ENCODE measurements at regions of chr12 and their contacts with region 1.

Region 1: DNA sequence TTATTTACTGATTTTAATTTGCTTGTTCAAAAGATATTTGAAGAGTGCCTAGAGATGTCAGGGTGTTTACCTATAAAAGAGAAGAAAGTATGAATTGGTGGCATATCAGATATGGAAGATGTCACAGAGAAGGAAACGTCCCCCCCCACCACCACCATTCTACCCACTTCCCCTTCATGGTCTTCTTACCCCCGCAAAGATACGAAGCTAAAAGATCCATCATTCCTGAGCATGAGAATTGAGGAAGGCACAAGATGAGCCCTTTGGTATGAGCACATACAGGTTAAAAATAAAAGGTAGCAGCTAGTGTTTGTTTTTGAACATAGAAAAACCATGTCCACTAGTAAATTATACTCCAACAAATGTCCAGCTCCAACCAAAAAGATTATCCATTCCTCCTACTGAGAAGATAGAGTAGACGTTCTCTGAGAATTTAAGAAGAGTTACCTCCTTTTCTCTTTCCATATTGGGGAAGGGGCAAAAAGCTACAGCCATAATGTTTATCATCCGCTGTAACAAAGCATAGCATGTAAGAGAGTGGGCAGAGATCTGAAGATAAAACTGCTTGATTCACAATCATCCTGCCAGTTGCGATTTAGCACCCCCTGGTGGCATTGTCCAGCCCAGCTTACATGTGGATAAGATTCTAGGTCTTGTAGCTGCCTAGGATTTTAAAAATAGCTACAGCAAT is 29.1 kb downstream of the NFYB start:
- DNase-seq: peak; percentile 60 to 85
- ATAC-seq: peak; percentile 91 to 99
- H3K4me3 ChIP-seq: no peak overlapping the region
- H3K27ac ChIP-seq: peak overlapping the region; percentile 17 to 55 (median 28)
- H3K4me1 ChIP-seq: peaks cover 13 to 15% of the 10 kb centered on the region in 2 donors
- H3K27me3 ChIP-seq: no peaks in the 10 kb centered on the region
- CTCF ChIP-seq: peak; percentile 62 to 90 (median 75)
- POLR2A ChIP-seq: no peak

Region 2: DNA sequence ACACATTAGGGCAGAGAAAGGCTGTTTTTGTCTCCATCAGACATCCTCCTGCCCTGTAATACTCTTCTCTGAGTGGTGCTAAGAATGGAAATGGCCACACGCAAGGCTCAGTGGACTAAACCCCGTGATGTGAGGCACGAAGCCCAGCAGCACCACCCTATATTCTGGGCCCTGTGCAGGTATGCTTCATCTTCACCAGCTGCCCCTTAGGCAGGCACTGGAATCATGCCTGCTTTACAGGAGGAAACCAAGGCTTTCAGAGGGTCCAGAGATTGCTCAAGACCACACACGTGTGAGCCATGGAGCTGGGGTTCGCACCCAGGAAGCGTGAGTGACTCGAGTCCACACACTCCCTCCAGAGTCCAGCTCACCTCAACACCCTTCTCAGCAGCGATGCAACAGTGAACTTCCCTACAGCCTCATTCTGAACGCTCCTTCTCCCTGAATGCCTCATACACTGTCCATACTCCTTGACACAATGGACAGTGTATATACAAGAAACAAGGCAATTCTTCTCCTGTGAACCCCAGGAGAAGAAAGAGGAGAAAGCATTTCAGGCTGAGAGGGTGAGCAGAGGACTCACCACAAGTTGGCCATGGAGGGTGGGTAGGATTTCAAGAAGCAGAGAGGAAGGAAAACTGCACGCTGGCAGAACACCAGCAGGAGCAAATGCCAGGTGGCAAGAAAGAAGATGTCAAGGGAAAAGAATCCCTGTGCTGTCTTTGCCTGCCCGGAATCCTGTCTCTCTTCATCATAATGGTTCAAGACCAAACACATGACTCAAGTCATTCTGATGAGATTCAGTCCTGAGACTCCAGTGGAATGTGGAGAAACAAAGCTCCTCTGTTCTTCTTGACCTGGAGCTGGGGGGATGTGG is 307.0 kb before region 1 on chr12:
- in situ Hi-C with region 1: no loop called
- intact Hi-C with region 1: no loop called
- DNase-seq: peak; percentile 66 to 81
- ATAC-seq: peak; percentile 37 to 40
- H3K4me3 ChIP-seq: no peak overlapping the region
- H3K27ac ChIP-seq: peak overlapping the region; percentile 58 to 93 (median 72)
- H3K4me1 ChIP-seq: peaks cover 31 to 48% of the 10 kb centered on the region in 2 donors
- H3K27me3 ChIP-seq: no peaks in the 10 kb centered on the region
- CTCF ChIP-seq: no peak
- POLR2A ChIP-seq: no peak

Region 3: DNA sequence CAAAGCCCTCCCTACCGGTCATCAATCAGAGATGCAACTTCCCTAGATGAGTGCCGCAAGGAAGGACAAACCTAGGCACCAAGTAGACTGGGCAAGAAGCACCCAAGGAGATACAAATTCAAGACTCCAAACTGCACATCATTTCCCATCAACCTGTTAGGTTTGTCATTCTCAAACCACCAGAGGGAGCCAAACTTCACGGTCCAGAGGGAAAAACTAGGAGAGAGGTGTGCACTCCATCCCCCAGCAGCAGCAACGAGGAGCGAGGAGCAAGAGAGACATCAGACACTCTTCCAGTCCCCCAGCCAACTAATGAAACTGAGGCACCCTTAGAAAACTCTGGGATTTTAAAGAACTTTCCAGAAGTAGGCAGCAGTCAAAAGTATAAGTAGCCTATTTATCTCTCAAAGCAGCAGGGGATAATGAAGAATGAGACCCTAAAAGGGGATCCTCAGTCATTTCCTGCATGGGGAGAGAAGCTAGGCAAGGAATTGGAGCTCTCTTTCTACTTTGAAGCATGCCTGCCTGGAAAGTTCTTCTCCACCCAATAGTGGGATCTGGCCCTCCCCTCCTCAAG is 230.9 kb before region 1 on chr12:
- in situ Hi-C with region 1: loop called in 3 of 4 experiments (anchors 5 to 10 kb)
- intact Hi-C with region 1: loop called (anchors 1 kb)
- DNase-seq: peak; percentile 29 to 41
- ATAC-seq: peak; percentile 85 to 90
- H3K4me3 ChIP-seq: no peak overlapping the region
- H3K27ac ChIP-seq: no peak overlapping the region
- H3K4me1 ChIP-seq: no peaks in the 10 kb centered on the region
- H3K27me3 ChIP-seq: no peaks in the 10 kb centered on the region
- CTCF ChIP-seq: peak; percentile 46 to 77 (median 62)
- POLR2A ChIP-seq: no peak

Region 4: DNA sequence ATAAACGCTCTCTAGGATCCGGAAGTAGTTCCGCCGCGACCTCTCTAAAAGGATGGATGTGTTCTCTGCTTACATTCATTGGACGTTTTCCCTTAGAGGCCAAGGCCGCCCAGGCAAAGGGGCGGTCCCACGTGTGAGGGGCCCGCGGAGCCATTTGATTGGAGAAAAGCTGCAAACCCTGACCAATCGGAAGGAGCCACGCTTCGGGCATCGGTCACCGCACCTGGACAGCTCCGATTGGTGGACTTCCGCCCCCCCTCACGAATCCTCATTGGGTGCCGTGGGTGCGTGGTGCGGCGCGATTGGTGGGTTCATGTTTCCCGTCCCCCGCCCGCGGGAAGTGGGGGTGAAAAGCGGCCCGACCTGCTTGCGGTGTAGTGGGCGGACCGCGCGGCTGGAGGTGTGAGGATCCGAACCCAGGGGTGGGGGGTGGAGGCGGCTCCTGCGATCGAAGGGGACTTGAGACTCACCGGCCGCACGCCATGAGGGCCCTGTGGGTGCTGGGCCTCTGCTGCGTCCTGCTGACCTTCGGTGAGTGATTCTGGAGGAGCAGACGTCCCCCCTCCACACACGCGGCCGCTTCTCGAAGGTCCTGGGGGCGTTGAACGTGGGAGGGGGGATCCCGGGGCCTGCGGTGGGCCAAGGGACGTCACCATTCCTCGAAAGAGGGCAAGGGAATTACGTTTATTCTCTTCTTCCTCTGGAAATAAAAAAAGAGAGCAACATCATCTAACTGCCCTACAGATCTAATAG is 178.7 kb before region 1 on chr12 and contains the start of gene HSP90B1:
- in situ Hi-C with region 1: loop called in 1 of 4 experiments (anchors 25 kb)
- intact Hi-C with region 1: no loop called
- DNase-seq: peak; percentile 100
- ATAC-seq: peak; percentile 90 to 93
- H3K4me3 ChIP-seq: peak within 1 kb of the TSS; percentile 79 to 91 (median 88)
- H3K27ac ChIP-seq: peak within 1 kb of the TSS; percentile 91 to 97 (median 94)
- H3K4me1 ChIP-seq: peaks cover 49 to 50% of the 10 kb centered on the region in 2 donors
- H3K27me3 ChIP-seq: no peaks in the 10 kb centered on the region
- CTCF ChIP-seq: no peak
- POLR2A ChIP-seq: peak; percentile 90 to 97
- total RNA-seq, gene HSP90B1: 60.3 to 94.8 (median 79.3) TPM

Region 5: DNA sequence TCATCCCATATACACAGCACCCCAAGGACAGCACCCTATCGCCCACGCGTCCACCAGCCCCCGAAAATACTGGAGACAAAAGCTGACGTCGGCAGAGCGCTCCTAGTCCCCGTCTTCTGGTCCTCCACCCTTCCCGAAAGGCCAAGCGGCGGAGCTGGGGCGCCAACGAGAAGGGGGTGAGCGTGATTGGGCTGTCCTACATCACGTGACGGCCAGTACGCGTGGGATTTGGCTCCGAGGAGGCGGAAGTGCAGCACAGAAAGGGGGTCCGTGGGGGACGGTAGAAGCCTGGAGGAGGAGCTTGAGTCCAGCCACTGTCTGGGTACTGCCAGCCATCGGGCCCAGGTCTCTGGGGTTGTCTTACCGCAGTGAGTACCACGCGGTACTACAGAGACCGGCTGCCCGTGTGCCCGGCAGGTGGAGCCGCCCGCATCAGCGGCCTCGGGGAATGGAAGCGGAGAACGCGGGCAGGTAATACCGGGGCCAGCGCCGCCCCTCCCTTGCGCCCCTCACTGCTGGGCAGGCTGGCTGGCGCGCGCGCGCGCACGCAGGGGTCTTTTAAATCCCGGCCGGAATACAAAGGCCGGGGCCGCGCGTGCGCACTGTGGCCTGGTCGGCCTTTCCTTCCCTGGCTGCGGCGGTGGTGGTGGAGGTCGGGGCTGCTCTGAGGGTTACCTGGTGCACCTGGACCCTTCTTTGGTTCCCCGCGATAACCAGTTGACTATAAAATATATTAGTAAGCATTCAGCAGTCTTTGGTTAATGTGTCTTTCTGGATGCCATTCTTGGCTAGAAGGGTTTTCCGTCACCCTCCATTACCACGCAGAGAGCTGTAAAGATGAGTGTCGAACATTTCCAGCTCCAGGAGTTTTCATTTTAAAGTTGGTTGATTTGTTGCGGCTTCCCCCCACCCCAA is 143.1 kb before region 1 on chr12 and contains the start of gene TDG:
- in situ Hi-C with region 1: no loop called
- intact Hi-C with region 1: loop called (anchors 2 kb)
- DNase-seq: peak; percentile 98 to 99
- ATAC-seq: peak; percentile 99 to 100
- H3K4me3 ChIP-seq: peak within 1 kb of the TSS; percentile 74 to 97 (median 88)
- H3K27ac ChIP-seq: peak within 1 kb of the TSS; percentile 90 to 97 (median 95)
- H3K4me1 ChIP-seq: peaks cover 33 to 46% of the 10 kb centered on the region in 2 donors
- H3K27me3 ChIP-seq: no peaks in the 10 kb centered on the region
- CTCF ChIP-seq: peak in 4 of 5 experiments; percentile 26 to 43 (median 35)
- POLR2A ChIP-seq: peak; percentile 86 to 88
- total RNA-seq, gene TDG: 5.1 to 17.5 (median 9.0) TPM

Region 6: GRCh38 chr12:104064031-104064822 is 44.7 kb before region 1 on chr12 and contains the start of gene HCFC2:
- in situ Hi-C with region 1: loop called in 1 of 4 experiments (anchors 5 kb)
- intact Hi-C with region 1: loop called (anchors 1 kb)
- DNase-seq: peak; percentile 87 to 89
- ATAC-seq: peak; percentile 95 to 96
- H3K4me3 ChIP-seq: peak within 1 kb of the TSS; percentile 73 to 98 (median 80)
- H3K27ac ChIP-seq: peak within 1 kb of the TSS; percentile 91 to 97 (median 96)
- H3K4me1 ChIP-seq: peaks cover 17 to 20% of the 10 kb centered on the region in 2 donors
- H3K27me3 ChIP-seq: no peaks in the 10 kb centered on the region
- CTCF ChIP-seq: peak in 1 of 5 experiments; percentile 9
- POLR2A ChIP-seq: peak in 1 of 2 donors; percentile 89
- total RNA-seq, gene HCFC2: 19.4 to 27.7 (median 21.8) TPM

Region 7: DNA sequence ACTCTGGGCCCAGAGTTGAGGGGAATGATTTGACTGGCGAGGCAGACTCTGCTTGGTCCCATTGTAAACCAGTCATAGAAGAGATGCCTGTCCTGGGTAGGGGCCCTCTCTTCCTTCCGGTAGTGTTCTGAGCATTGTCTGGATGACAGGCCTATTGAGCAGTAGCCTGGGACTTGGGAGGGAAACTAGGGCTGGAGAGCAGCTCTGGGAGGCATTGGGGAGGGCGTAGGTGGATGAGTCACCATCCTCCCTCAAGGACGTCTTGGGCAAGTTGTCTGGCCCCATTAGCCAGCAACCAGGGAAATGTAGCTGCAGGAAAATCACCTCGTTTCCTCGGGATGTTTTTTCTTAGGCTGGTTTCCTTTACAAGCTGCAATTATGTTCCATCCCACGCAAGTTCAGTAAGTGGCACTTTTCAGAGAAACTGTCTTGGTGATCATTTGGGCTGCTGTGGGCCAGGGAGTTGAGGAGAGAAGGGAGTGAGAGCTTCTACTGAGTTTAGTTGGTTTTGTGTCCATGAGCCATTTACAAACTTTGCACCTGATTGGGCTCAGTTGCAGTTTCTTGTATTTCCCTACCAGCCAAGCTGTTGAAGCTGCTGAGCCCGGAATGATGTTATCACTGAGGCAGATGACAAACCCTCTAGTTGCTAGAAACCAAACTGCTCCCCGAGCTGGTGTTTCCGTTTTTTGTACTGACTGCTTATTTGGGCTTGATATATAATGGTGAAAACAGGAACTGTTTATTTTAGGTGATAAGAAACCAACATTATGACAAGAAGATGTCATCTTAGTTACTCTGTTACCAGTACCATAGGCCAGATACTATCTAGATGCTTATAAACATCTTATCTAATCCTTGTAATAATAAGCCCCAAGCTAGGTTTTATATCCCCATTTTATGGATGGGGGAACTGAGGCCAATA is 495.4 kb after region 1 on chr12:
- in situ Hi-C with region 1: no loop called
- intact Hi-C with region 1: no loop called
- DNase-seq: peak; percentile 48 to 69
- ATAC-seq: peak; percentile 80 to 84
- H3K4me3 ChIP-seq: no peak overlapping the region
- H3K27ac ChIP-seq: peak overlapping the region; percentile 24 to 68 (median 50)
- H3K4me1 ChIP-seq: no peaks in the 10 kb centered on the region
- H3K27me3 ChIP-seq: no peaks in the 10 kb centered on the region
- CTCF ChIP-seq: no peak
- POLR2A ChIP-seq: no peak